Ascending aorta (tissue), 2 donors: ENCODE measurements at regions of chr1 and their contacts with region 1.

Region 1: DNA sequence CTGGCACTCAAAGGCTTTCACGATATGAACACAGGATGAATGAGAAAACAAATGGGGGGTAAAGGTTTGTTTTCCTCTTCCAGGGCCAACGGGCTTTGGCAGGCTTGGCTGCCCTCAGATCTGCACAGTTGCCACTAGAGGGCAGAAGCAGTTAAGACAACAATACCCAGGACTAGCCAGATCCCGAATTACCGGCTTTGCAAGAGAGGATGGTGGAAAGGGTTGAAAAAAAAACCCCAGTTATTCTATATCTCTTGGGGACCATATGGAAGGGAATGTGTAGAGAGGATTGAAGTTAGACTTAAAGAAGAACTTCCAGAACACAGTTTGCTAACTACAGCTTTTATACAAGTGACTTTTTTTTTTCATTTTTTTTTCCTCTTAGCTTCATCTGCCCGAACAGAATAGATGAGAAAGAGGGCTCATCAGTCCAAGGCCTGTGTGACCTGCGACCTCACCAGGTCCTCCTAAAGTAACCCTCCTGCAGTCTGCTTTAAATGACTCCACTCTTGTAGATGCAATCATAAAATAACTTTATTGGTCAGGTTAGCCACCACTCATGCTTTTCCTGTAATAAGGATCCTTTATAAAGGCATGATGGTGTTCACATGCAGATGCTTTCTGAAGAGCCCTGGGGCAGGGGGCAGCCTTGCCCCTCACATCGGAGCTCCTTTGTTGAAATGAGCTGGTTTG is 10.7 kb downstream of the FMOD start:
- DNase-seq: peak in 1 of 2 donors; percentile 83
- H3K4me3 ChIP-seq: no peak overlapping the region
- H3K27ac ChIP-seq: peak overlapping the region; percentile 3 to 22
- H3K4me1 ChIP-seq: peaks cover 4 to 42% of the 10 kb centered on the region in 2 donors
- H3K27me3 ChIP-seq: no peaks in the 10 kb centered on the region
- CTCF ChIP-seq: peak; percentile 86 to 88 (median 88)

Region 2: GRCh38 chr1:203267347-203267846 is 72.9 kb before region 1 on chr1:
- intact Hi-C with region 1: loop called (anchors 1 kb)
- DNase-seq: peak in 1 of 2 donors; percentile 94
- H3K4me3 ChIP-seq: peak overlapping the region; percentile 62 to 69
- H3K27ac ChIP-seq: peak overlapping the region; percentile 70 to 84
- H3K4me1 ChIP-seq: peaks cover 0 to 3% of the 10 kb centered on the region in 2 donors
- H3K27me3 ChIP-seq: no peaks in the 10 kb centered on the region
- CTCF ChIP-seq: peak; percentile 85 to 96 (median 91)

Region 3: DNA sequence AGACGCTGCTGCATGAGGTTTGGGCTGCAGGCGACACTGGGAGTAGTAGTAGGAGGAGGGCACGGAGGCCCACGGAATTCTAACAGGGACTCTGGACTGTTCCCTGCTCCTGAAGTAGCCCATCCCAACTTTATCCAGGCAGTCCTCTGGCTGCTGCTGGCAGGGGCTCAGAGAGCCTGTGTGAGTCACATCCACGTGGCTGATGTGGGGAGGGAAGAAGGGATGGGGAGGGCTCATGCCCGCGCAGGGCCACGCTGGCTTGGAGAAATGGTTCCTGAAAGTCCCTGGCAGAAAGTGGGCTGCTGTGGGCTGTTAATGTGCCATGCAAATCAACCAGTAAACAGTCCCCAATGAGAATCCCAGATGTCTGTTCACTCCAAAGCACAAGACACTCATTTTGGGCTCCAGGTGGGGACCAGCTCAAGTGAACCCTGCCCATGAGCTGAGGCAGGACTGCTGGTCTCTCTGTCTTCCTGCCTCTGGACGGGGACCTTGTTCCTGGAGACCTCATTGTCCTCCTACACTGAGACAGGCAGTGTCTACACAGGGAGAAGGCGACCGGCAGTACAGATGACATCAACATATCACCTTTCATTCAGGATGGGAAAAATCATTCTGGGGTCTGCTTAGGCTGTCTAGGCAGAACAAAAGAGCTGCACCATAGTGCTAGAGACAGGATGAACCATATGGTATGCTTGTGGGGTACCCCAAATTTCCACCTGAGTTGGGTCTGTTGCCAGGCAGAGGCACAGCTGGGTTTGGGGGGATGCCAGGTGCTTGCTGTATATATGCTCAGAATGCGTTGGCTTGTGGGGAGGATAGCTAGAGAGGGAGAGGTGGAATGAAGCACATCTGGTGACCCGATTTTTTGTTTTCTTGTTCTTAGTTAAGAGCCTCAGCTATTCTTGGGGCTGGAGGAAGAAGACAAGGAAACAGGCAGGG is 68.5 kb after region 1 on chr1:
- intact Hi-C with region 1: loop called (anchors 2 kb)
- DNase-seq: peak; percentile 78 to 94
- H3K4me3 ChIP-seq: no peak overlapping the region
- H3K27ac ChIP-seq: peak overlapping the region; percentile 92 to 97
- H3K4me1 ChIP-seq: peaks cover 37 to 56% of the 10 kb centered on the region in 2 donors
- H3K27me3 ChIP-seq: no peaks in the 10 kb centered on the region
- CTCF ChIP-seq: no peak

Region 4: DNA sequence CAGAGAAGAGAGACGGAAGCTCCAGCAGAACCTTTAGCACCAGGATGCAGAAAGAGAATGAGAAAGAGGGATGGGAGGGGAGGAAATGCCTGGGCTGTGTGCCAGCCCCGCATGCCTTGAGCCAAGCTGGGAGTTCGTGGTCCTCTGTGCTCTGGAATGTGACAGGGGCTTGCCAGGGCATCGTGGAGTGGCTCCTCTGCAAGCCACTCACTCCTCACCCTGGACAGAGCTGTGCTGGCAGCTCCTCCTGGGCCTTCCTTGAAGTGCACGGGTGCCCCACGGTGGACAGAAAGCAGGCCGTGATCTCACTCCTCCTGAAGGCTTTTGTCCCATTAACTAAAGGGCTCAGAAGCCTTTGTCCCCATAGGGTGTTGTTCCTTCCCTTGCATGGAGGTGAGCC is 100.5 kb after region 1 on chr1:
- intact Hi-C with region 1: loop called (anchors 1 kb)
- DNase-seq: peak in 1 of 2 donors; percentile 92
- H3K4me3 ChIP-seq: no peak overlapping the region
- H3K27ac ChIP-seq: peak overlapping the region; percentile 73 to 79
- H3K4me1 ChIP-seq: peaks cover 0 to 16% of the 10 kb centered on the region in 2 donors
- H3K27me3 ChIP-seq: no peaks in the 10 kb centered on the region
- CTCF ChIP-seq: peak; percentile 79 to 86 (median 82)

Region 5: GRCh38 chr1:203475012-203475981 is 135.0 kb after region 1 on chr1 and contains the start of gene PRELP:
- intact Hi-C with region 1: no loop called
- DNase-seq: peak in 1 of 2 donors; percentile 85
- H3K4me3 ChIP-seq: peak within 1 kb of the TSS; percentile 56 to 63
- H3K27ac ChIP-seq: peak within 1 kb of the TSS; percentile 88 to 92
- H3K4me1 ChIP-seq: peaks cover 5 to 14% of the 10 kb centered on the region in 2 donors
- H3K27me3 ChIP-seq: no peaks in the 10 kb centered on the region
- CTCF ChIP-seq: no peak
- total RNA-seq, gene PRELP: 142 TPM

Region 6: DNA sequence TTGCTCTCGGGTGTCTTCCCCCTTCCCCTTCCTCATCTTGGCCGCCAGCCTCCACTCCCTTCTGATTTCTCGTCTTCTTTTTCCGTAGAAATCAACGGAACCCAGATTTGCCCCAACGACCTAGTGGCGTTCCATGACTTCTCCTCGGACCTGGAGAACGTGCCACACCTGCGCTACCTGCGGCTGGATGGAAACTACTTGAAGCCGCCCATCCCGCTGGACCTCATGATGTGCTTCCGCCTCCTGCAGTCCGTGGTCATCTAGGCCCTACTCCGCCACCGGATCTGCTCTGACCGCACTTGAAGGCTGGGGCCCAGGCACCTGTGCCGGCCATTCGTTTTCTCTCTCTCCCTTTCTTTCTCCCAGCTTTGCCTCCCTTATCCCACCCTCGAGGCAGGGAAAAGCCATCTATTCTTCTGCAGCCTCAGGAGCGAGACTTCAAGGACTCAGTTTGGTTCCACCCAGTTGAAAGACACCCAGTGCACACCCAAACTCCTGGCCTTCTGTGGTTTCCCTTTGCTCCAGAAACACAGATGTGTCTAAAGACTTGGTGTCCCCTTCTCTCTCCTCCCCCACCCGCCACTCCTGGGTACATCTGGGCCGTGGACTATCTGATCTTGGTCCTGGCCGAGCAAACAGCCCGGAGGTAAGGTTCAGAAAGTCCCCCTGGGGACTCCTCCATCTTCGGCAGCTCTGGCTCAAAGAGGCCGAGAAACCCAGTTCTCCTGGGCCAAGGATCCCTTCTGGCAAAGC is 146.5 kb after region 1 on chr1:
- intact Hi-C with region 1: loop called (anchors 1 kb)
- DNase-seq: no peak
- H3K4me3 ChIP-seq: peak overlapping the region; percentile 29 to 52
- H3K27ac ChIP-seq: peak overlapping the region; percentile 77 to 86
- H3K4me1 ChIP-seq: peaks cover 24 to 54% of the 10 kb centered on the region in 2 donors
- H3K27me3 ChIP-seq: no peaks in the 10 kb centered on the region
- CTCF ChIP-seq: no peak

Region 7: GRCh38 chr1:203692565-203693470 is 352.6 kb after region 1 on chr1:
- intact Hi-C with region 1: loop called (anchors 10 kb)
- DNase-seq: peak; percentile 76 to 96
- H3K4me3 ChIP-seq: no peak overlapping the region
- H3K27ac ChIP-seq: peak overlapping the region; percentile 82 to 87
- H3K4me1 ChIP-seq: peaks cover 17 to 38% of the 10 kb centered on the region in 2 donors
- H3K27me3 ChIP-seq: no peaks in the 10 kb centered on the region
- CTCF ChIP-seq: no peak